GM12878 (cell line): ENCODE measurements at regions of chr3 and their contacts with region 1.

Region 1: GRCh38 chr3:17195856-17196604 is 311.3 kb downstream of the PLCL2 start:
- DNase-seq: peak; percentile 83
- ATAC-seq: peak; percentile 91
- H3K4me3 ChIP-seq: no peak overlapping the region
- H3K27ac ChIP-seq: peak overlapping the region; percentile 54
- H3K4me1 ChIP-seq: peaks cover 25% of the 10 kb centered on the region
- H3K27me3 ChIP-seq: no peaks in the 10 kb centered on the region
- CTCF ChIP-seq: peak; percentile 32 to 49 (median 32); a peak in 4 of 6 replicates
- EP300 ChIP-seq: peak; percentile 61 to 89; a peak in 3 of 4 replicates
- POLR2A ChIP-seq: no peak
- RAD21 ChIP-seq: peak; percentile 51

Region 2: GRCh38 chr3:16600780-16601539 is 595.1 kb before region 1 on chr3:
- CTCF ChIA-PET with region 1: interaction called, 11 read pairs
- POLR2A ChIA-PET with region 1: no interaction called
- RAD21 ChIA-PET with region 1: interaction called, 3 read pairs
- SMC1A ChIA-PET with region 1: interaction called, 7 read pairs
- in situ Hi-C with region 1: no loop called
- intact Hi-C with region 1: no loop called
- DNase-seq: no peak
- ATAC-seq: peak; percentile 86
- H3K4me3 ChIP-seq: no peak overlapping the region
- H3K27ac ChIP-seq: no peak overlapping the region
- H3K4me1 ChIP-seq: peaks cover 7% of the 10 kb centered on the region
- H3K27me3 ChIP-seq: no peaks in the 10 kb centered on the region
- CTCF ChIP-seq: peak; percentile 56 to 81 (median 69)
- EP300 ChIP-seq: no peak
- POLR2A ChIP-seq: no peak
- RAD21 ChIP-seq: peak; percentile 96

Region 3: GRCh38 chr3:16834212-16834611 is 361.8 kb before region 1 on chr3:
- CTCF ChIA-PET with region 1: interaction called, 4 read pairs
- POLR2A ChIA-PET with region 1: interaction called, 6 read pairs
- RAD21 ChIA-PET with region 1: interaction called, 6 read pairs
- SMC1A ChIA-PET with region 1: interaction called, 15 read pairs
- in situ Hi-C with region 1: no loop called
- intact Hi-C with region 1: no loop called
- DNase-seq: no peak
- ATAC-seq: no peak
- H3K4me3 ChIP-seq: no peak overlapping the region
- H3K27ac ChIP-seq: no peak overlapping the region
- H3K4me1 ChIP-seq: peaks cover 19% of the 10 kb centered on the region
- H3K27me3 ChIP-seq: no peaks in the 10 kb centered on the region
- CTCF ChIP-seq: peak in 2 of 3 experiments; percentile 28 to 31; a peak in 2 of 6 replicates
- EP300 ChIP-seq: no peak
- POLR2A ChIP-seq: no peak
- RAD21 ChIP-seq: peak; percentile 51

Region 4: DNA sequence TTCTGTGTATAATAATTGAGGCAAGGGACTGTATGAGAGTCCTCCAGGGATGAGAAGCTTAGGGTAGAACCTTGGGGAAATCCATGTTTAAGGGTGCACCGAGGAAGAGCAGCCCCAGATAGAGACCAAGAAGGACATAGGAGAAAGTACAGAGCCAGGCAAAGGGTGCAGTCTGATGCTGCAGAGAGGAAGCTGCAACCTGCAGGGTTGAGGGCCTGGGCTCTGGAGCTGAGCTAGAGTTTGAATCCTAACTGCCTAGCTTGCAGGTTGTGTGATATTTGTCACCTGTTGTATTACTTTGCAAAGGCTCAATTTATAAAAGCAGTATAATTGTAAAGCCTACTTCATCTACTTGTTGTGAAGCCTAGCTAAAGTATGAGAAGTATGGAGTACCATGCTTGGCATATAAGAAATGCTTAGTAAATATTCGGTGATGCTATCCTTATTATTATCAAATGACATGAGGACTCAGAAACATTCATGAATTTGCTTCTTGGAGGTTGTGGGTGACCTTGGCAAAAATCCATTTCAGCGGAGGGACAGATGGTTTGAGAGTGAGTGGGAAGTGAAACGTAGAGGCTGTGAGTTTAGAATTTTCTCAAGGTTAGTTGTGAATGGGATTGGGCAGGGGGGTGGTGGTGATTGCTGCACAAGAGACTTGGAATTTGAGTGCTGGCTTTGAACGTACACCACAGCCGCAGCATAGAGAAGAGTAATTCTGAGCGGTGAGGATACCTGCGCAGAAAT is 267.5 kb before region 1 on chr3:
- CTCF ChIA-PET with region 1: interaction called, 8 read pairs
- POLR2A ChIA-PET with region 1: no interaction called
- RAD21 ChIA-PET with region 1: interaction called, 3 read pairs
- SMC1A ChIA-PET with region 1: interaction called, 3 read pairs
- in situ Hi-C with region 1: no loop called
- intact Hi-C with region 1: loop called (anchors 5 kb)
- DNase-seq: no peak
- ATAC-seq: peak; percentile 69
- H3K4me3 ChIP-seq: 0 out of 2 replicates have a peak overlapping the region, but pooled peaks have one; percentile 4
- H3K27ac ChIP-seq: peak overlapping the region; percentile 63
- H3K4me1 ChIP-seq: peaks cover 66% of the 10 kb centered on the region
- H3K27me3 ChIP-seq: no peaks in the 10 kb centered on the region
- CTCF ChIP-seq: no peak
- EP300 ChIP-seq: no peak
- POLR2A ChIP-seq: no peak
- RAD21 ChIP-seq: no peak

Region 5: GRCh38 chr3:17151598-17152373 is 44.2 kb before region 1 on chr3:
- CTCF ChIA-PET with region 1: interaction called, 13 read pairs
- POLR2A ChIA-PET with region 1: interaction called, 10 read pairs
- RAD21 ChIA-PET with region 1: interaction called, 64 read pairs
- SMC1A ChIA-PET with region 1: interaction called, 20 read pairs
- in situ Hi-C with region 1: no loop called
- intact Hi-C with region 1: loop called (anchors 1 kb)
- DNase-seq: peak; percentile 92
- ATAC-seq: peak; percentile 96
- H3K4me3 ChIP-seq: 0 out of 2 replicates have a peak overlapping the region, but pooled peaks have one; percentile 1
- H3K27ac ChIP-seq: peak overlapping the region; percentile 76
- H3K4me1 ChIP-seq: peaks cover 25% of the 10 kb centered on the region
- H3K27me3 ChIP-seq: no peaks in the 10 kb centered on the region
- CTCF ChIP-seq: 0 out of 6 replicates have a peak, but pooled peaks of 1 of the 3 experiments have one; percentile 1
- EP300 ChIP-seq: peak; percentile 73 to 82
- POLR2A ChIP-seq: peak; percentile 67; the same call in 1 of the 2 replicates
- RAD21 ChIP-seq: peak; percentile 32

Region 6: DNA sequence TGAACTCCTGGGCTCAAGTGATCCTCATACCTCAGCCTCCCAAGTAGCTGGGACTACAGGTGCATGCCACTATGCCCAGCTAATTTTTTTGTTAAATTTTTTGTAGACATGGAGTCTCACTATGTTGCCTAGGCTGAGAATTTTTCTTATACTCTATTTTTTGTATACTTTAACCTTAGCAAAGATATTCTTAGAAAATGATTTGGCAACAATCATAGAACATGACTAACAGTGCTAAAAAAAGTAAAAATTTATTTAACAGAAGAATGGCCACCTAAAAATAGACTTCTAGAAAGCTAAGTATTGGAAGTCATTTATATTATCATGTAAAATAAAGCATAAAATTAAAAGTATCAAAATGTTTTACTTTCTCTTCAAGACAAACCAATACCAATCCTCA is 11.0 kb after region 1 on chr3:
- CTCF ChIA-PET with region 1: interaction called, 5 read pairs
- POLR2A ChIA-PET with region 1: no interaction called
- RAD21 ChIA-PET with region 1: interaction called, 13 read pairs
- SMC1A ChIA-PET with region 1: interaction called, 45 read pairs
- in situ Hi-C with region 1: no loop called
- intact Hi-C with region 1: no loop called
- DNase-seq: no peak
- ATAC-seq: no peak
- H3K4me3 ChIP-seq: no peak overlapping the region
- H3K27ac ChIP-seq: no peak overlapping the region
- H3K4me1 ChIP-seq: no peaks in the 10 kb centered on the region
- H3K27me3 ChIP-seq: no peaks in the 10 kb centered on the region
- CTCF ChIP-seq: no peak
- EP300 ChIP-seq: no peak
- POLR2A ChIP-seq: no peak
- RAD21 ChIP-seq: no peak

Region 7: GRCh38 chr3:17227472-17227871 is 31.4 kb after region 1 on chr3:
- CTCF ChIA-PET with region 1: interaction called, 98 read pairs
- POLR2A ChIA-PET with region 1: interaction called, 3 read pairs
- RAD21 ChIA-PET with region 1: interaction called, 30 read pairs
- SMC1A ChIA-PET with region 1: interaction called, 65 read pairs
- in situ Hi-C with region 1: no loop called
- intact Hi-C with region 1: no loop called
- DNase-seq: no peak
- ATAC-seq: no peak
- H3K4me3 ChIP-seq: no peak overlapping the region
- H3K27ac ChIP-seq: no peak overlapping the region
- H3K4me1 ChIP-seq: peaks cover 5% of the 10 kb centered on the region; the same call in 1 of the 2 replicates
- H3K27me3 ChIP-seq: no peaks in the 10 kb centered on the region
- CTCF ChIP-seq: no peak
- EP300 ChIP-seq: no peak
- POLR2A ChIP-seq: no peak
- RAD21 ChIP-seq: no peak